T-cell (primary cell): ENCODE measurements at regions of chrX and their contacts with region 1.

Region 1: DNA sequence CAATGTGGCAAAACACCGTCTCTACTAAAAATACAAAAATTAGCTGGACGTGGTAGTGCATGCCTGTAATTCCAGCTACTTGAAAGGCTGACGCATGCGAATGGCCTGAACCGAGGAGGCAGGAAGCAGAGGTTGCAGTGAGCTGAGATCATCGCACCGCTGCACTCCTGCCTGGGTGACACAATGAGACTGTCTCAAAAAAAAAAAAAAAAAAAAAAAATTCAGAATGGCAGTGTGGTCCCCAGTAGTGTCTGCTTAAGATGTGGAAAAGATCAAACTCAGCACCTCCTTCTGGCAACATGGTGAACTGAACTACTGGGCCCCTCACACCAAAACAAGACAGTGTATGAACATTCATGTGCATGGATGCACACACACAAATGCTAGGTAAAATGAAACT is 32.2 kb downstream of the SMS start:
- DNase-seq: peak in 34 of 35 experiments; percentile 5 to 65 (median 36)
- ATAC-seq: peak; percentile 66 to 92 (median 72)
- H3K4me3 ChIP-seq: no peak overlapping the region
- H3K4me3 Mint-ChIP-seq: peak overlapping the region in 2 of 3 donors; percentile 51 to 60
- H3K27ac ChIP-seq: peak overlapping the region; percentile 84
- H3K27ac Mint-ChIP-seq: peak overlapping the region; percentile 86 to 93
- H3K4me1 ChIP-seq: peaks cover 7 to 18% of the 10 kb centered on the region in 2 experiments
- H3K4me1 Mint-ChIP-seq: peaks cover 24 to 33% (median 31%) of the 10 kb centered on the region in 3 donors
- H3K27me3 ChIP-seq: no peaks in the 10 kb centered on the region
- H3K27me3 Mint-ChIP-seq: peaks cover 0 to 4% of the 10 kb centered on the region in 2 donors

Region 2: DNA sequence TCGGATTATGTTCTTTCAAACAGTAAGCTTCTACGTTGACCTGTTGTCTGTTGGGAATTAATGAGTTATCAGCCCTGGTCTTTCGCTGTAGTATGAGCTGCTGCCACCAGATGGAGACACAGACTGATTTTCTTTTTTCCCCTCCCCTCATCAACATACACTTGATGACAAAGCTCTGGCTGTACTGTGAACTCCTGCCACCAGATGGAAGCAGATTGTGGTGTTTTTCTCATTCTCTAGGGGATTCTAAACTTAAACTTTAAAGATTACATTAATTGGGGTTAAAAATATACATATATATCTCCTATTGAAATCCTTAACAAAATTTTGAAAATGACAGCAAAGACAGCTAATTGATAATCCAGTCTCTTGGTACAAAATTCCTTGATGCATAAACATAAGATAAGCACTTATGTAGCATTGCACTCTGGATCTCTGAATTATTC is 12.6 kb after region 1 on chrX:
- CTCF ChIA-PET with region 1: interaction called, 12 to 14 read pairs
- POLR2A ChIA-PET with region 1: no interaction called
- DNase-seq: peak; percentile 15 to 80 (median 51)
- ATAC-seq: peak; percentile 93 to 99 (median 96)
- H3K4me3 ChIP-seq: no peak overlapping the region
- H3K4me3 Mint-ChIP-seq: no peak overlapping the region
- H3K27ac ChIP-seq: no peak overlapping the region
- H3K27ac Mint-ChIP-seq: no peak overlapping the region
- H3K4me1 ChIP-seq: peaks cover 0 to 2% of the 10 kb centered on the region in 2 experiments
- H3K4me1 Mint-ChIP-seq: peaks cover 0 to 4% (median 0%) of the 10 kb centered on the region in 3 donors
- H3K27me3 ChIP-seq: no peaks in the 10 kb centered on the region
- H3K27me3 Mint-ChIP-seq: peaks cover 0 to 6% of the 10 kb centered on the region in 2 donors